ENCODE measurements at regions of chr18 and their contacts with region 1.

Region 1: GRCh38 chr18:72063001-72063400 is 481.1 kb downstream of the CBLN2 start:
- DNase-seq: no peak
- ATAC-seq: no peak

Region 2: DNA sequence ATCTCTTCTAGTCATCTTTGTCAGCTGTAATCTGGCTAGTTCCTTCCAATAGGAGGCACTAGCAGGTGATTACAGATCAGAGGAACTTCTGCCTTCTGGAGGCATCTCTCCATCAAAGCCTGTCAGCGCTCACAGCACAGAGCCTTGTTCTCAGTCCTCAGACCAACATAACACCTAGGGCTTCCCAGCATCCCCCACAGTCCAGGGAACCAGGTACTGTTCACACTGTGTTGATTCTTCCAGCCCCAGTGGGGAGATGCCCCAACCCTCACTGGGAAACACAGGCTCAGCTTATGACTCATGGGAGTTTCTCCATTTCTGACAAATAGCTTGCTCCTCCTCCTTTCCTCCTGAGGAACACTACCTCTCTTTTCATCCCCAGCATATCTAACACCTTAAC is 120.6 kb before region 1 on chr18:
- intact Hi-C with region 1: no loop called
- DNase-seq: no peak
- ATAC-seq: no peak

Region 3: DNA sequence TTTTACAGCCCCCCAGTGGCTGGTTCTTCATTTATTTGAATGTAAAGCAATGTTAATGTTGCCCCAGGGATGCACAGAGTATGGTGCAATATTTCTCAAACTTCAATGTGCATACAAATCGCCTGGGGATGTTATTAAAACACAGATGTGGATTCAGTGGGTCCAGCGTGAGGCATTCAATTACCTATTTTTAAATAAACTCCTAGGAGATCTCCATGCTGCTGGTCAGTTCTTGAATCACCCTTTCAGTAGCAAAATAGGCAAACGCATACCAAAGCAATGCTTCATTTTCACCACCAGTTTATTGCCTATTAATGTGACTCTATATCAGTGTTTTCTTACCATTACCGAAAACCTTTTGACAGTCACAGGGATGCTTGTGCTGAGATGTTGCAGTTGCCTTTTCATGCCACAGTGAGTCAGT is 49.6 kb before region 1 on chr18:
- intact Hi-C with region 1: loop called in 1 of 2 experiments (anchors 10 kb)
- DNase-seq: no peak
- ATAC-seq: no peak

Region 4: GRCh38 chr18:72114801-72115594 is 52.0 kb after region 1 on chr18:
- intact Hi-C with region 1: no loop called
- DNase-seq: no peak
- ATAC-seq: no peak

Region 5: GRCh38 chr18:72283148-72283925 is 220.3 kb after region 1 on chr18:
- intact Hi-C with region 1: no loop called
- DNase-seq: no peak
- ATAC-seq: no peak

Measured in left colon (tissue), 2 donors.